Cardiac septum (tissue), 1 donor: ENCODE measurements at regions of chr10 and their contacts with region 1.

Region 1: GRCh38 chr10:44386546-44387052 is 1.7 kb upstream of the CXCL12 start:
- DNase-seq: peak; percentile 81

Region 2: DNA sequence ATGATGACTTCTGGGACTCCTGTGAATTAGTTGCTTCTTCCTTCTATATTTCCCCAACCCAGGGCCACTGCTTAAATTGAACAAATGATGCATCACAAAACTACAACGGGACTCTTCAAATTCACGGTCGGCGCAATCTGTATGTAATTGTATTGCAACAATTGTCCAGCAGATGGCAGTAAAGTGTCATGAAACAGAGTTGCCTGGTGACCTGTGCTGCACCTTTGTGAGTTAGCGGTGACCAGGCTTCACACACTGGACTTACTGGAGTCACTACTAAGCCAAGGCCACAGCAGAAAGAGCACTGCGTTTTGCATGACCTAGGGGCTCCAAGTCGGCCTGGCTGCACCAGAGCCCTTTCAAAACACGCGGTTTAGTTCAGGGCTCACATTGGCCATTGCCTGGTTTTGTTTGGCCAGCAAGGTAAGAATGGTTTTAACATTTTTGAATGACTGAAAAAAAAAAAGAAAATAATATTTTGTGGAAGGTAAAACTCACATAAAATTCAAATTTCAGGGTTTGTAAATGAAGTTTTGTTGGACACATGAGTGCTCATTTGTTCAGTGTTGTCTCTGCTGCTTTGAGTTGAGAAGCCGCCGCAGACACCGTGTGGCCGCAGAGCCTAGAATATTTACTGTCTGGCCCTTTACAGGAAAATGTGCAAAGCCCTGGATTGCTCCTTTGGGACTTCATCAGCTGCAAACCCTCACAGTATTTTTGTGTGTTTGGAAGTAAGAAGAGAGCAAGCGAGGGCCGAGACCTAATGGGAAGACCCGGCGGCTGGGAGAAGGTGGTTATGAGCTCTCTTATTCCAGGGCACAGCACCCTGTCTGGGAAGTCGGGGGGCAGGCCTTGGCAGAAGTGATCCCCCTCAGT is 714.7 kb before region 1 on chr10:
- intact Hi-C with region 1: loop called (anchors 1 kb)
- DNase-seq: no peak

Region 3: DNA sequence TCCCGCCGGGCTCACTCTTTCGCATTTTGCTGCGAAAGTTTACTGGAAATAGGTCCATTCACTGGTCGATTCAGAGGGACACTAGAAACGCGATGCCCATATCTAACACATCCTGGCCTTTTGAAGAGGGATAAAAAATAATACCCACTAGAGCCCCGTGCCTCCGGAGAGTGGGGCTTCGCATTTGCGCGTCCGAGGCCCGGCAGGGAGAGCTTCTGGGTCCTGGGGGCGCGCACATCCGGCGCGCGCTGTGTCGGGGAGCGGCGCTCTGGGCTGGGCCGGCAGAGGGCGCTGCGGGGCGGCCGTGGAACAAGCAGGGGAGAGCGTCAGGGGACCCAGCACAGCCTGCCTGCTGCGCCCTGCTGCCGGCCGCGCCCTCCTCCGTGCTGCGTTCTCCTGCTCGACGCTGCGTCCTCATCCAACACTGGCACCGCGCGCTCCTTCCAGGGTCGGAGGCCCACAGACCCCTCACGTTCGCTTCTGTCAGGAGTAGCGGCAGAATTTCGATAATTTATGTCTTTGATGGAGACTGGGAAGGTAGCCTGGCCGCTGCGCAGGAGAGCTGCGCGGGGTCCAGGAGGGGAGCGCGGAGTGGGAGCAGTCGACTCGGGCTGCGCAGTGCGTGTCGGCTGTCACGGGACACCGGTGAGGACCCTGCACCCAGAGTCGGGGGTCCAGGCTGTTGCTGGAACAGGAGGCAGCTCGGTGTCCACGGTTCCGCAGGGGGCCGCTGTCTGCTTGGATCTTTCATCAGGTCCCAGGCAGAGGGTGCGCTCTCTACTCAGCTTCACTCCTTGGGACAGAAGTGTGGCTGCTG is 696.4 kb before region 1 on chr10:
- intact Hi-C with region 1: loop called (anchors 2 kb)
- DNase-seq: peak; percentile 93

Region 4: GRCh38 chr10:43816351-43817321 is 570.0 kb before region 1 on chr10:
- intact Hi-C with region 1: loop called (anchors 10 kb)
- DNase-seq: no peak

Region 5: GRCh38 chr10:43922335-43923280 is 464.0 kb before region 1 on chr10:
- intact Hi-C with region 1: loop called (anchors 10 kb)
- DNase-seq: peak; percentile 63

Region 6: DNA sequence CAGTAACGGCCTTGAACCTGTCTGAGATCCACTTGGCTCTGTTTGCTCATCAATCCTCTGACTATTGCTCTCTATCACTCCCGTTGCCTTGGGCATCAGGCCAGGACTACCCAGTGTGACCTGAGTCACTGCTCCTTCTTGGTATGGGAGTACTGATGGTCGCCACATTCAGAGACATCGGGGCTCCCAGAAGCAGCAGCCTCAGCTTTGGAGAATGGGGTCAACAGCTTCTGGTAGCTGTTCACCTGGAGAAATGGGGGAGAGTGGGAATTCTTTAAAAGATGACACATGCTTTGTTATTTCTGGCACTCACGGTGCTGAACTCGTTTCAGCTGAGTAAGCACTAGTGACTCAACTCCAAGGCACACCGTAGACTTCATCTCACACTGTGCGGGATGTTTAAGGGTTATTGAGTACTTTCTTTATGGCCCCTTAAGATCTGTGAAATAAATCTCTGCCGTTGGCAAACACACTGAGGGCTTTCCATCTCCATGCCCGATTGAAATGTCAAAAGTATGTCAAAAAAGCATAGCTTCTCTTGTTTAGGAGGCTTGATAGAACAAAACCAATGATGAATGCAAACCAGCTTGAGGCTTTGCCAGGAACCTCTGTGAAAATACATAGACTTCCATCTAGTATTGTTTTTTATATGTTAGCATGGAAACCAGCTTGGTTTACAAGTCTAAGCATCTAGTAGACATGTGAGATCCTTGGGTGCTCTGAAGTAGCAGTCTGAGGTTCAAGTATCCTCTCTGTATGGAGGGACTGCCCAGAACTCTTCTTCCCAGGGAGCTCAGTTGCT is 334.8 kb before region 1 on chr10:
- intact Hi-C with region 1: loop called (anchors 10 kb)
- DNase-seq: no peak

Region 7: DNA sequence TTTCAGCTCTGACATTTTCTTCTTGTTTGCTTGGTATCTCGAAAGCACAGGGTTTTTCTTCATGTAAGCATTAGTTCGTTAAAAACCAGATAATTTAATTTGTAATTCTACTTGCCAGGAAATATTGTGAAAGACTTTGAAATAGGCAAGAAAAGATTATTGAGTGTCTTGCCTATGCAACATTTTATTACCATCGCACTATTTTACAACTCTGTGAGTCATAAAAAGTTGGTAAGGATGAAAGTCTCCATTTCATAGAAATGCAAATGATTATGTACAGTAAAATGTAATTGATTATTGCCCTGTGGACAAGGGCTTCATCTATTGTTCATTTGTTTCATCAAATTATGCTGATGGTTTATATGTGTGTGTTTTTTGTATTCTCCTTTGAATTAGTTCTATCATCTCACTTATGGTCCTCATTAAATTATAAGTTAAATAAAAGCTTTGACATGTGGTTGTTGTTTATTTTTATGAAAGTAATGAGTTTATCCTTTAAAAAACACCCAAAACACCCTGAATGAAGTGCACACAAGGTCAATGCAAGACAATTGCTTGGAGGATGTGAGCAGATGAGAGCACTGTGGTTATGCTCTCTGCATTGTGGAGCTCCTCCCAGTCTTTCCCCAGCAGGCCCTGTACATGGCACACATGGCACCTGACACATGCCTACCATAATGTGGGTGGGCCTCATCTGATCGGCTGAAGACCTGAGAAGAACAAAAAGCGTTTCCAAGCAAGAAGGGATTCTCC is 232.5 kb before region 1 on chr10:
- intact Hi-C with region 1: no loop called
- DNase-seq: no peak

Region 8: DNA sequence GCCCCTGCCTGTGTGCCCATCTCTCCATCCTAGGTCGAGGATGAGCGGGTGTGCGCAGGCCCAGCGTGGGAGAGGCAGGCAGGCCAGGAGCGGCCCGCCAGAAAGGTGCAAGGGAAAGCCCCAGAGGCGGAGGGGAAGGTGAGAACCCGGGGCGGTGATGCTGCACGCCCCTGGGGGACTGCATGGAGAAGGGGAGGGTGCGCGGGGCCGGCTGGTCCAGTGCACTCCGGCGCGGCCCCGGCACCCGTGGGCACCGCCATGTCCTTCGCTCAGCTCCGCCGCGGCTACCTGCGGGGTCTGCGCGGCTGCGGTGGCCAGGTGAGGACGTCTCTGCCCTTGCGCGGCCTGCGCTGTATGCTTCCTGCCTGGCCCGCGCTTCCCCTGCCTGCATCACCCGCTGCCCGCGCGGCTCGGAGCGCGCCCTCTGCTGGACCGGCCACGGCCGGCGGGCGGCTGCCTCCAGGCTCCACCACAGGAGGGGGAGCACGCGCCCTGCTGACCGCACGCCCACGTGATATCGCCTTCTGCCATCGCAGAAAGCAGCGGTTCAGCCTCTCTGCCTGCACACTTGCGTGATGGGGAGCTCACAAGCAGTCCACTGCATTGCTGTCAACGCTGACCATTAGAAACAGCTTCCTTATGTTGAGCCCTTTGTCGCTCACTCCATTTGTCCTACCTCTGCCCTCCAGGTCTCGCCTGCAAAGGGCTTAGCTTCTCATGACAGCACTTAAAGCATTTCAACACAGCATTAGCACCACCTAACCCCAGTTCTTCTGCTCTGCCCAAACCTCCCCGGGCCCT is 75.6 kb before region 1 on chr10:
- intact Hi-C with region 1: loop called (anchors 5 kb)
- DNase-seq: peak; percentile 93